ENCODE measurements at regions of chr12 and their contacts with region 1.

Region 1: GRCh38 chr12:96194971-96195844 is 1.0 kb downstream of the ELK3 start:
- DNase-seq: peak; percentile 91
- H3K4me3 Mint-ChIP-seq: peak overlapping the region; percentile 94
- H3K27ac Mint-ChIP-seq: peak overlapping the region; percentile 97
- H3K4me1 Mint-ChIP-seq: peaks cover 41% of the 10 kb centered on the region
- H3K27me3 Mint-ChIP-seq: no peaks in the 10 kb centered on the region

Region 2: DNA sequence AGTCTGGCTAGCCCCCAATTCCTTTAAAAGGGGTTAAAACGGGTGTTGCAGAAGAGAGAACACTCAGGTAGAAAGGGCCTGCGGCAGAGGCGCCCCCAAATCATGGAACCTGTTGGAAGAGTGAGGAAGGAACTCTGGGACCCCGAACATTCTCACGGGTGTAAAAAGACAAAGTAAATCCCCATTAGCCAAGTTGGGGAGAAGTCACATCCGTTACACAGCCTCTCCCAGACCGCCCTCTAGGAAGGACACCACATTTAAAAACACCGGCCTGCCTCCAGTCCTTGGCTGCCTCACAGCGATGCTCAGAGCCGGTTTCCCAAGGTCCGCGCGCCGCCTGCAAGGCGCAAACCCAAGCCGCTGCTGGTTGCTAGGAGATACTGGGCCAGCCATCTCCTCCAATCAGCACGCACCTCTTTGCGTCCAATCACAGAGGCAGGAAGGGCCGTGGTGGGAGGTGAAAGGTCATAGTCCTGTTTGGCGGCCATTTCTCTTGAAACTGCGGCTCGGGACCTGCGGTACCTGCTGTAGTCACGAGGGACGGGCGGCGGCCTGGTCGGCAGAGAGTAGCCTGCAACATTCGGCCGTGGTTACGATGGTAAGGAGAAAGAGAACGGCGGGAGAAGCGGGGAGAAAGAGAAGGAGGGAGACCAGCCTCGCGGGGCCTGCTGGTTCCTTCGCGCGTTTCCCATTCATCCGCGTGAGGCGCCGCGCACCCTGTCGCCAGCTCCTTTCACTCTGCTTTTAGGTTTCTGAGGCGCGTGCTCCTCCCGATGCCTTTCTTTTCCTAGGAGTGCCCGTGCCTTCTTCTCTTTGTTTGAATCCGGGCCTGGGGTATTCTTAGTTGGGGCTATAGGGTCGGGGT is 336.5 kb before region 1 on chr12 and contains the start of gene SNRPF:
- intact Hi-C with region 1: loop called (anchors 10 kb)
- DNase-seq: peak; percentile 98
- H3K4me3 Mint-ChIP-seq: peak within 1 kb of the TSS; percentile 41
- H3K27ac Mint-ChIP-seq: no peak within 1 kb of the TSS
- H3K4me1 Mint-ChIP-seq: peaks cover 17% of the 10 kb centered on the region
- H3K27me3 Mint-ChIP-seq: peaks cover 11% of the 10 kb centered on the region
- total RNA-seq, gene SNRPF: 64.3 and 68.8 TPM in 2 replicates

Region 3: DNA sequence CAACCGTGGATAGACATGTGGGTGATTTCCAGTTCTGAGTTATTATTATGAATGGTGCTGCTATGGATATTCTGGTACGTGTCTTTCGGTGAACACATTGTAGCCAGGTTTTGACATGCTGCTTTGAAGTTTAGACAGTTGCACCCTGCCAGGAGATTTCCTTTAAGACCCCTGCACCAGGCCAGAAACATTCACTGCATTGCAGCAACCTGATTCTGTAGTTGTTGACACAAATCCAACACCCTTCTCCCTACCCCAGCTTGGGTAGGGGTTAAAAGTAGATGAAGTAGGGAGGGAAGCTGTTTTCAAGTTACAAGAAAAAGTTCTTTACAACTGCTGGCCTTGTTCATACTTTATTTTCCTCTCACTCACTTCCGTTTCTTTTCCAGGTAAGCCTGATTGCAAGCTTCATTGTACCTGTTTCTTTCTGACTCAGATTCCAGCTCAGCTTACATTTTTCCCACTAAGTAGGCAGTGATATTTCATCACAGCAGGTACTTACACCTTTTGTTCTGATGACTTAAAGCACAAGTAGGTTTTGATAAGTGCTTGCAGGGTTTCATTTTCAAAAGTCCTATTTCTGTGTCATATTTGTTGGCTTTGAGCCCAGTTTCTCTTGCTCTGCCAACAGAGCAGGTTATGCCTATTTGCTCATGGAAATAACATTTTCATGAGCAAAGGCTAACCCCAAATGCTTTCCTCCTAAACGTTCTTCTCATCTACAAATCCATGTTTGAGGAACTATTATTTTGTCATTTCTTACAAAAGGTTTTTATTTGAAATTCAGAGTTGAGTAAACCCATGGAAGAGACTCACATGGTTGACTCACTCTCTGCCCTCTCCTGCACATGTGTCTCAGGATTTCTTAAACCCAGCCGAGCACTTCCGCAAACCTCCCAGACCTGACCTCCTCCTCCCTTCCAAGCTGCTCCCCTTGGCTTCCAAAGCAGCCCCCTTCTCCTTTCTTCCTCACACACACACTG is 147.7 kb before region 1 on chr12:
- intact Hi-C with region 1: loop called (anchors 1 kb)
- DNase-seq: peak; percentile 73
- H3K4me3 Mint-ChIP-seq: peak overlapping the region; percentile 53
- H3K27ac Mint-ChIP-seq: peak overlapping the region; percentile 81
- H3K4me1 Mint-ChIP-seq: peaks cover 38% of the 10 kb centered on the region
- H3K27me3 Mint-ChIP-seq: no peaks in the 10 kb centered on the region

Region 4: DNA sequence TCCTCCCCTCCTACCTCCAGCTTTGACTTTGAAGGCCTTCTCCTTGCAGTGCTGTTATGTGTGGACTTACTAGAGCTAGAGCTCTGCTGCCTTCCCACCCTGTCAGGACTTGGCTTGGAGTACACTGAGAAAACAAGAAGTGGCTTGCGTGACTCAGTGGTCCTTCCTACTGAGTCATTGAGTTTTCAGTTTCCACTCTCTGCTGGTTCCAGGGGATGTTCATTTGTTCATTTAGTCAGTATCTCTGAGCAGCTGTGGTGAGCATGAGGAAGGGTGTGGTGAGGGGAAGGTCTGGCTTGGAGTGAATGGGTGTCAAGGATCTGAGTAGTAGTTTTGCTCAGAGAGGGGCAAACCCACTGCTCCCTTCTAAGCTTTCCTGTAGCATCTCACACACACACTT is 18.2 kb before region 1 on chr12:
- intact Hi-C with region 1: loop called (anchors 1 kb)
- DNase-seq: peak; percentile 87
- H3K4me3 Mint-ChIP-seq: peak overlapping the region; percentile 36
- H3K27ac Mint-ChIP-seq: peak overlapping the region; percentile 90
- H3K4me1 Mint-ChIP-seq: peaks cover 12% of the 10 kb centered on the region
- H3K27me3 Mint-ChIP-seq: no peaks in the 10 kb centered on the region

Region 5: GRCh38 chr12:96219698-96220206 is 24.5 kb after region 1 on chr12:
- intact Hi-C with region 1: loop called (anchors 1 kb)
- DNase-seq: no peak
- H3K4me3 Mint-ChIP-seq: no peak overlapping the region
- H3K27ac Mint-ChIP-seq: no peak overlapping the region
- H3K4me1 Mint-ChIP-seq: peaks cover 27% of the 10 kb centered on the region
- H3K27me3 Mint-ChIP-seq: no peaks in the 10 kb centered on the region

Region 6: DNA sequence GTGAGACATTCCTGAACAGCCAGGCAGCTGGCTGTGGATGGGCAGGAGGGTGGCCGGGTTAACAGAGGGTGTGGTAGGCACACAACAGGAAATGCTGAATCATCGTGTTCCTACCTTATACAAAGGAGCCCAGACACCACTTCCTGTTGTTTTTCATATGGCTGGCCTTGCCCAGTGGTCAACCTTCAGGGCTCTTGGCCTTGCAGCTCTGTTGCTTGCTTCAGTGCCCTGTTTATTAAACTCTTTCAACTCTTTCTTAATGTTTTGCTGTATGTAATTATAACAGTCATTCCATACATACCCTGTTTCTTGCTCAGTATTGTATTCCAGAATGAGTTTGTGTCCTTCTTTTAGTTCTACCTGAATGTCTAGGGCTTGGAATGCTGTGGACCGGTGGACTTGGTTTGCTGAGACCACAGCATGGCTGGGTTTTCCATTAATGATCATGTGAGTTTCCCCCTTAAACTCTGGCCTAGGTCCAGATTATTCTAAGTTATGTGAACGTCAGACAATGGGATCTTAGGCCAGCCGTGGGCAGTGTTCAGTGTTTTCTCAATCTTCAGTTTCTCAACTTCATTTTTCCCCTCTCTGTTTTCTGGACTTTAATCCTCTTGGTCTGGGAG is 306.0 kb after region 1 on chr12:
- intact Hi-C with region 1: loop called (anchors 5 kb)
- DNase-seq: peak; percentile 81
- H3K4me3 Mint-ChIP-seq: peak overlapping the region; percentile 51
- H3K27ac Mint-ChIP-seq: peak overlapping the region; percentile 82
- H3K4me1 Mint-ChIP-seq: peaks cover 40% of the 10 kb centered on the region
- H3K27me3 Mint-ChIP-seq: no peaks in the 10 kb centered on the region